ENCODE measurements at regions of chr15 and their contacts with region 1.

Region 1: GRCh38 chr15:58227706-58228543 is 89.7 kb downstream of the AQP9 start:
- DNase-seq: peak; percentile 86
- ATAC-seq: peak; percentile 67

Region 2: DNA sequence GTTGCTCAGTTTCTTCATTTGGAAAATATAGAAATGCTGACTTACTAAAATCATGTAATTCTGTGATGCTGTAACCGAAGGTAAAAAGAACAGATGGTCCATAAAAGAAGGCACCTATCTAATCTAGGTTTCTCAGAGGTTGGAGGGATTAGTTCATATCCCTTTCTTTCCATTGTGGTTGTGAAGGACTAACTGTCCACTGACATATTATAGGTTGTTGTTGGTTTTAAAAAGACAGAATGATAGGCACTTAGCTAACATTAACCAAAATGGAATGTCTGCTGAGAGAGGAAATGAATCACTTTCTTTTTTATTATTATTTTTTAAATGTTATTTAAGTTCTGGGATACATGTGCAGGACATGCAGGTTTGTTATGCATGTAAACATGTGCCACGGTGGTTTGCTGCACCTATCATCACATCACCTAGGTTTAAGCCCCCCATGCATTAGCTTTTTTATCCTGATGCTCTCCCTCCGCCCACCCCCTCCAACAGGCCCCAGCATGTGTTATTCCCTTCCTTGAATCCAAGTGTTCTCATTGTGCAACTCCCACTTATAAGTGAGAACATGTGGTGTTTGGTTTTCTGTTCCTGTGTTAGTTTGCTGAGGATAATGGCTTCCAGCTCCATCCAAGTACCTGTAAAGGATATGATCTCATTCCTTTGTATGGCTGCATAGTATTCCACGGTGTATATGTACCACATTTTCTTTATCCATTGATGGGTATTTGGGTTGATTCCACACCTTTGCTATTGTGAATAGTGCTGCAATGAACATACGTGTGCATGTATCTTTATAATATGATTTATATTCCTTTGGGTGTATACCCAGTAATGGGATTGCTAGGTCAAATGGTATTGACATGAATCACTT is 208.2 kb before region 1 on chr15:
- intact Hi-C with region 1: no loop called
- DNase-seq: no peak
- ATAC-seq: no peak

Region 3: GRCh38 chr15:58749532-58750337 is 521.8 kb after region 1 on chr15 and contains the start of gene ADAM10:
- intact Hi-C with region 1: loop called (anchors 10 kb)
- DNase-seq: peak; percentile 99
- ATAC-seq: peak; percentile 99
- total RNA-seq, gene ADAM10: 273 TPM